HEK293 (cell line): ENCODE measurements at regions of chr1 and their contacts with region 1.

Region 1: GRCh38 chr1:235313931-235314678 is 13.9 kb downstream of the ARID4B start:
- H3K4me3 ChIP-seq: no peak overlapping the region
- H3K27ac ChIP-seq: no peak overlapping the region
- H3K4me1 ChIP-seq: peaks cover 13% of the 10 kb centered on the region; the same call in 1 of the 2 replicates
- CTCF ChIP-seq: no peak

Region 2: DNA sequence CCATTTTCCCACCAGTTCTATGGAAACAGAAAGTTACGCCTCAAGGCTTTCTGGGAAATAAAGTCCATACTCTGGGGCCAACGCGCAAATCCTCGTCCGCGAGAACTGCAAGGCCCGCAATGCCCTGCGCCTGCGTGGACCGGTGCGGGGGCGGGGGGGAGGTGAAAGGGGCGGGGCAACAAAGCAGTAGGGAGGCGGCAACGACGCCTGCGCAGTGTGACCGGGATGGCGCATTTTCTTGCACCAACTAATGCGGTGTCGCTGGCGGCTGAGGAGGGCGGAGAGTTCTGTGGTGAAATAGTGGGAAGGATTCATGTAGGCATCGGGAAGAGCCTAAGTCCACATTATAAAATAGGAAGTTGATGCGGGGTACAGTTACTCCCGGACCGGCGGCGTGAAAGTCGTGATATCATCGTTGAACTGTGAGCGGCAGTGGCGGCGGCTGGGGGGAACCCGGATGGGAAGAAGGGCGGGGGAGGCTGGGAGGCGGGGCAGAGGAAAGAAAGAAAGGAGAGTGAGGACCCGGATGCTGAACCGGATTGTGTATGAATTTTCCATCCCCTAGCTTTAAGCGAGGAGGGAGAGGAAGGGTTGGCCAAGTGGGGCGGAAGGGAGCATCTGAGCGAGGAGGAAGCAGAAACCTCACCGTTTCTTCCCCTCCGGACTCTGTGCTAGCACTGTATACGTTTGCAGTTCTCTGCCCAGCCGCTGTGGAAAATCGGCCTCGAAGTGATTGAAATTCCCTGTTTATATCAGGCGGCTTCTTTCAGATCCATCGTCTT is 14.4 kb after region 1 on chr1 and contains the start of gene GGPS1:
- CTCF ChIA-PET with region 1: interaction called, 3 read pairs
- POLR2A ChIA-PET with region 1: interaction called, 12 read pairs
- H3K4me3 ChIP-seq: peak within 1 kb of the TSS; percentile 97
- H3K27ac ChIP-seq: peak within 1 kb of the TSS; percentile 95
- H3K4me1 ChIP-seq: peaks cover 38% of the 10 kb centered on the region
- CTCF ChIP-seq: no peak; the same call in 1 of the 2 replicates